ENCODE measurements at regions of chr6 and their contacts with region 1.

Region 1: GRCh38 chr6:146700078-146700686 is 101.4 kb downstream of the ADGB start:
- DNase-seq: peak; percentile 62
- ATAC-seq: no peak
- H3K4me3 Mint-ChIP-seq: no peak overlapping the region
- H3K27ac Mint-ChIP-seq: no peak overlapping the region
- H3K4me1 Mint-ChIP-seq: no peaks in the 10 kb centered on the region
- H3K27me3 Mint-ChIP-seq: peaks cover 2% of the 10 kb centered on the region

Region 2: DNA sequence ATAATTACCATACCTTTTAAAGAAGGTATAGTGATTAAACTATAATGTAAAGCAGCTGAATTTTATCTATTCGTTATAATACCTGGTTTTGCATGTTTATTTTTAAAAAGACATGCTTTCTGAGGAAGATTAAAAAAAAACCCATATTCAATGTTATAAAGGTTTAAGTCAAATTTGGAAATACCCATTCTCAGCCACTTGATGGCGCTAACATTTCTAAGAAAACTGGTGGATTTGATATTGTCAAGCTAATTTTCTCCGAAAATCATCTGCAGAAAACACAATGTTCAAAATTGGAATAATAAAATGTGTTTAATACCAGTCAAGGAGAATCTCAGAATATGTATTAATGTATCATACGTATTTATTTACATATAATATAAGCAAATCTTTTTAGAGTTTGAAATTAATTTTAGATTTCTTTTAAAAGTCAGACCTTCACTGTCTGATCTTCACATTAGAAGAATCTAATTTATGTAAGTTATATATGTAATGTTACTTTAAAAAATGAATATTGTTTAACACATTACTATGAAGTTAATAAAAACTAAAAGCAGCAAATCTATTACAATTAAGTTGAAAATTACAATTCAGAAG is 771.0 kb before region 1 on chr6:
- CTCF ChIA-PET with region 1: interaction called, 4 read pairs
- POLR2A ChIA-PET with region 1: no interaction called
- intact Hi-C with region 1: loop called in 1 of 2 experiments (anchors 2 kb)
- DNase-seq: no peak
- ATAC-seq: no peak
- H3K4me3 Mint-ChIP-seq: no peak overlapping the region
- H3K27ac Mint-ChIP-seq: no peak overlapping the region
- H3K4me1 Mint-ChIP-seq: no peaks in the 10 kb centered on the region
- H3K27me3 Mint-ChIP-seq: no peaks in the 10 kb centered on the region

Region 3: GRCh38 chr6:146090474-146090873 is 609.7 kb before region 1 on chr6:
- CTCF ChIA-PET with region 1: no interaction called
- POLR2A ChIA-PET with region 1: no interaction called
- intact Hi-C with region 1: no loop called
- DNase-seq: no peak
- ATAC-seq: no peak
- H3K4me3 Mint-ChIP-seq: no peak overlapping the region
- H3K27ac Mint-ChIP-seq: no peak overlapping the region
- H3K4me1 Mint-ChIP-seq: no peaks in the 10 kb centered on the region
- H3K27me3 Mint-ChIP-seq: peaks cover 4% of the 10 kb centered on the region

Region 4: DNA sequence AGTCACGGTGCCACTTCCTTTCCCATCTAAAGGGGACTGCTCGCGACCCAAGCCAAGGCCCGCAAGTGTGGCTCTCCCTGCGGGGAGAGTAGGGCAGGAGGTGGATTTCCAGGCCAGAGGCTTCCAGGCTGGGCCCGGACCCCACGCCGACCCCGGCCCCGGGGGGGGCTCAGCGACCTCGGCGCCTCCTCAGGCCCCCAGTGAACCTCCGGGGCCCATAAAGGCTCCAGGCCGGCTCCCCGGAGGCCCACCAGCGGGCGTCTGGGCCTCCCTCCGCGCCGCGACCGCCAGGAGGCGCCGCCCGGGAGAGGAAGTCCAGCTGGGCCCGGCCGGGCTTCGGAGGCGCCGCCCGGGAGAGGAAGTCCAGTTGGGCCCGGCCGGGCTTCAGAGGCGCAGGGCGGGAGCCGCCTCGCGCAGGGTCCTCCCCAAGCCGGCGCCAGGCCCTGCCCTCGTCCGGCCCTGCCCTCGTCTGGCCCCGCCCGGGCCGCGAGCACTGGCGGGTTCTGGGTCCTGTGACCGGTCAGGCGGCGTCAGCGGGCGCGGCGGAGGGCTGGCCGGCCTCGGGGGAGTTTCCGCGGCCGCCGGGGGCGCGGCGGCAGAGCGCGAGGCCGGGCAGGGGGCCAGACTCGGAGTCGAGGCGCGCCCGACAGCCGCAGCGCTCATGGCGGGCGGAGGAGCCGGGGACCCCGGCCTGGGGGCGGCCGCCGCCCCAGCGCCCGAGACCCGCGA is 156.8 kb before region 1 on chr6 and contains the start of gene RAB32:
- CTCF ChIA-PET with region 1: no interaction called
- POLR2A ChIA-PET with region 1: no interaction called
- intact Hi-C with region 1: loop called (anchors 5 kb)
- DNase-seq: peak; percentile 49
- ATAC-seq: peak; percentile 59
- H3K4me3 Mint-ChIP-seq: peak within 1 kb of the TSS; percentile 69
- H3K27ac Mint-ChIP-seq: peak within 1 kb of the TSS; percentile 19
- H3K4me1 Mint-ChIP-seq: peaks cover 5% of the 10 kb centered on the region
- H3K27me3 Mint-ChIP-seq: peaks cover 26% of the 10 kb centered on the region
- total RNA-seq, gene RAB32: 0.44 to 1.1 TPM

Measured in activated CD4-positive, alpha-beta T cell treated with anti-CD3 and anti-CD28 coated beads for 36 hours (primary cell).